Panc1 (cell line): ENCODE measurements at regions of chr4 and their contacts with region 1.

Region 1: DNA sequence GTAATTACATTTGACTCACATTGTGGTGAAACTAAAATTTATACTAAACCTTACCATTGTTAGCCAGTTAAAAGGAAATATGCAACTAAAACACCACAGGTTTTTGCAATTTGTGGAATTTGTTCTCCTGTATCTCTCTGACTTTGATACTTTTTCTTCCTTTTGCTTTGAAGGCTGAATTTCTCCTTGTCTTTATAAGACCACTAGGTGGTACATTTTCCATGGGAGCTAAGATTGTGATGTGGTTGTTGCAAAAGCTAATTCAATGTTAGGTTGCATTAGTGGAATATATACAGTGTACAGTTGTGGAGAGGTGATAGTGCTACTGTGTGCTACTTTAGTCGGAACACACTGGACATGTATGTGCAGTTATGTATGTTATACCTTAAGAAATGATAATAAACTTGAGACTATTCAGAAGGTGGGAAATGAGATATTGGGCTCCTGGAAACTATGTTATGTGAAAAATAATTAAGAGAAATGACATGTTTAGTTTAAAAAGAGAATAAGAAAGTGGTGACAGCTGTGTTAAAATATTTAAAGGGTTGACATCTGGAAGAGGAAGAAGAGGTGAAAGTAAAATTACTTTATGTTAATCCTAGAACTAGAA is 70.3 kb downstream of the ARL9 start:
- DNase-seq: no peak
- ATAC-seq: peak; percentile 51; the same call in 1 of the 2 replicates
- H3K4me3 ChIP-seq: no peak overlapping the region
- H3K27ac ChIP-seq: no peak overlapping the region
- H3K4me1 ChIP-seq: no peaks in the 10 kb centered on the region
- H3K27me3 ChIP-seq: no peaks in the 10 kb centered on the region
- CTCF ChIP-seq: peak; percentile 33; the same call in 1 of the 2 replicates

Region 2: DNA sequence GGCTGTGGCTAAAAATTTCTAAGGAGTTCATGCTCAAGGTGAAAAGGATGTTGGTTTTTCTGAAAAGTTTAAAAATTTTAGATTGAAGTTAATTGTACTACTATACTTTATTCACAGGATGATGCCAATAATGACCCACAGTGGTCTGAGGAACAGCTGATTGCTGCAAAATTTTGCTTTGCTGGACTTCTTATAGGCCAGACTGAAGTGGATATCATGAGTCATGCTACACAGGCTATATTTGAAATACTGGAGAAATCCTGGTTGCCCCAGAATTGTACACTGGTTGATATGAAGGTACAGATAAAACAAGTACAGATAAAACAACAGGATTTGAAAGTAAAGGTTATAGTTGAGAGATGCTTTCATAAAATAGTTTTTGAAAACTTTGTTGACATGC is 127.6 kb before region 1 on chr4:
- CTCF ChIA-PET with region 1: interaction called, 10 read pairs
- POLR2A ChIA-PET with region 1: no interaction called
- in situ Hi-C with region 1: no loop called
- intact Hi-C with region 1: no loop called
- DNase-seq: no peak
- ATAC-seq: no peak
- H3K4me3 ChIP-seq: no peak overlapping the region
- H3K27ac ChIP-seq: no peak overlapping the region
- H3K4me1 ChIP-seq: no peaks in the 10 kb centered on the region
- H3K27me3 ChIP-seq: no peaks in the 10 kb centered on the region
- CTCF ChIP-seq: no peak

Region 3: DNA sequence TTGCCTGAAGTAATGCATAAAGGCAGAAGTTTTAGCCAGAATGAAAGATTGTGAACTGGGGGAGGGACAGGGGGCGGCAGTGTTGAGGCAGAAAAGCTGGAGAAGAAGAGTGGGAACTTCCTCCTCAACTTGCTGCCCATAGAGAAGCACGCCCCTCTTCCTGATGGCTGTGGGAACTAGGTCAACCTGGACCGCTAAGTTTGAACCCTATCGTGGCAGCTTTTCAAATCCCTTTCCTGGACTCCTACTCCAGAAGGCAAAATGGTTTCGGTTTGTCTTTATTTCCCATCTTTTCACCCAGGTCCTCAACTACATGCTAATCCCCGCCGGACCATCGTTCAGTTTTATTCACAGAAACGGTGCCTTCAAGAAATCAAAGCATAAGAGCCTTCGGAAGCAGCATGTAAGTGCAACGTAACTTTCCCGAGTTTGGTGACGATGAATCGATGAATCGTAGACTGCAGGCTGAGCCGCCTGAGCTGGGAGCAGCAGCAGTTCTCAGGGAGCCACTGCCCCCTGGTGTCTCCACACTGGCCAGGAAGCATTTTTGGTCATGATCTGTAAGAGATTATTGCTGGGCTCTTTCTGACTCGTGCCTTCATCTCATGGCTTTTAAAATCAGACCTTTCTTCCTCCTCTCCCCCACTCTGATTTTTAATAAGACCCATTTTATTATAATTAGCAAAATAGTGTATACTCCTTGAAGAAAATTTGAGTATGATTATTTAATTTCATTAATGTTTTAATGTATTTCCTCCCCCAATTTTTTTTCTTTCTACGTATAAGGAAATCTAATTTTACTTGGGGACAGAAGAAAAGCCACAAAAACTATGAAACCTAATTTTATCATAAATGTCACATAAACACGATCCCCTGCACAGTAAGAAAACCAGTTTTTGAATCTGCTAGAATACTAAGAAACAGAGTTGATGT is 224.2 kb after region 1 on chr4:
- CTCF ChIA-PET with region 1: interaction called, 7 read pairs
- POLR2A ChIA-PET with region 1: no interaction called
- in situ Hi-C with region 1: no loop called
- intact Hi-C with region 1: loop called (anchors 2 kb)
- DNase-seq: peak; percentile 67
- ATAC-seq: peak; percentile 99
- H3K4me3 ChIP-seq: peak overlapping the region; percentile 53 to 83
- H3K27ac ChIP-seq: no peak overlapping the region; the same call in 1 of the 2 replicates
- H3K4me1 ChIP-seq: peaks cover 2% of the 10 kb centered on the region; the same call in 1 of the 2 replicates
- H3K27me3 ChIP-seq: no peaks in the 10 kb centered on the region
- CTCF ChIP-seq: peak; percentile 89